ENCODE measurements at regions of chr3 and their contacts with region 1.

Region 1: GRCh38 chr3:168847291-168847883 is 751.7 kb upstream of the GOLIM4 start:
- DNase-seq: no peak
- ATAC-seq: no peak

Region 2: GRCh38 chr3:168047190-168047795 is 800.1 kb before region 1 on chr3:
- intact Hi-C with region 1: loop called (anchors 10 kb)
- DNase-seq: no peak
- ATAC-seq: peak; percentile 77

Region 3: GRCh38 chr3:168213920-168214319 is 633.5 kb before region 1 on chr3:
- intact Hi-C with region 1: loop called (anchors 2 kb)
- DNase-seq: no peak
- ATAC-seq: no peak

Region 4: DNA sequence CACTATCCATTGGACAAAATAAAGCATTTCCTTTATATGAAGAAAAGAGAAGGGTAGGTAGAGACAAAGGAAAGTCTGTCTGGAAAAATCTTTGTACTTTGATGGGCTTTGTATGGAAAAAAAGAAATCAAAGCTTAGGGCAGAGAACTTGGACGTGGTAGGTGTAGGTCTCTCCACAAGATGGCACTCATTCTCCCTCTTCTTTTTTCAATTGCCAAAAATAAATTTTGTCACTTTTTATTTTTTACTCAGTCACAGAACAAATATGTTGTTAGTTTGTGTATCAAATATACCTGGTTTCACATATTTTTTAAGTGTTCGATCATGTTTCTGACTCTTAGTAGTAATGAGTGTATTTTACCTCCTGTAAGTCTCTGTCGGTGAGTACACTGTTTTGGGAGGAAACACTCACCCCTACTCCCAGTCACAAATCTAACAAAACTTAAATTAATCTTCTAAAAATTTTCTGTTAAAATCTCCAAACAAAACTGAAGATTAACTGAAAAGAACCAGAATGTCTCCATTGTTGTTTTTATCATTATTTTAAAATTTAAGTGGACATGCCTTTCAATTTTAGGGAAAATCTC is 335.9 kb before region 1 on chr3:
- intact Hi-C with region 1: loop called (anchors 2 kb)
- DNase-seq: no peak
- ATAC-seq: no peak

Region 5: GRCh38 chr3:168884353-168884903 is 37.0 kb after region 1 on chr3:
- intact Hi-C with region 1: no loop called
- DNase-seq: no peak
- ATAC-seq: no peak

Measured in Right ventricle myocardium inferior (tissue), 1 donor.